Vagina (tissue), 2 donors: ENCODE measurements at regions of chr12 and their contacts with region 1.

Region 1: GRCh38 chr12:74671421-74671820 is 133.8 kb downstream of the ATXN7L3B start:
- DNase-seq: no peak
- H3K4me3 ChIP-seq: no peak overlapping the region
- H3K27ac ChIP-seq: no peak overlapping the region
- H3K4me1 ChIP-seq: no peaks in the 10 kb centered on the region
- H3K27me3 ChIP-seq: no peaks in the 10 kb centered on the region
- CTCF ChIP-seq: no peak
- POLR2A ChIP-seq: no peak

Region 2: GRCh38 chr12:73950507-73950906 is 720.9 kb before region 1 on chr12:
- intact Hi-C with region 1: no loop called
- DNase-seq: no peak
- H3K4me3 ChIP-seq: no peak overlapping the region
- H3K27ac ChIP-seq: no peak overlapping the region
- H3K4me1 ChIP-seq: no peaks in the 10 kb centered on the region
- H3K27me3 ChIP-seq: no peaks in the 10 kb centered on the region
- CTCF ChIP-seq: no peak
- POLR2A ChIP-seq: no peak

Region 3: GRCh38 chr12:76470028-76470939 is 1798.9 kb after region 1 on chr12:
- intact Hi-C with region 1: loop called (anchors 5 kb)
- DNase-seq: no peak
- H3K4me3 ChIP-seq: no peak overlapping the region
- H3K27ac ChIP-seq: no peak overlapping the region
- H3K4me1 ChIP-seq: no peaks in the 10 kb centered on the region
- H3K27me3 ChIP-seq: no peaks in the 10 kb centered on the region
- CTCF ChIP-seq: no peak
- POLR2A ChIP-seq: no peak